Activated B cell treated with CpG ODN at 0.5 μM for 24 hours (primary cell): ENCODE measurements at regions of chr2 and their contacts with region 1.

Region 1: DNA sequence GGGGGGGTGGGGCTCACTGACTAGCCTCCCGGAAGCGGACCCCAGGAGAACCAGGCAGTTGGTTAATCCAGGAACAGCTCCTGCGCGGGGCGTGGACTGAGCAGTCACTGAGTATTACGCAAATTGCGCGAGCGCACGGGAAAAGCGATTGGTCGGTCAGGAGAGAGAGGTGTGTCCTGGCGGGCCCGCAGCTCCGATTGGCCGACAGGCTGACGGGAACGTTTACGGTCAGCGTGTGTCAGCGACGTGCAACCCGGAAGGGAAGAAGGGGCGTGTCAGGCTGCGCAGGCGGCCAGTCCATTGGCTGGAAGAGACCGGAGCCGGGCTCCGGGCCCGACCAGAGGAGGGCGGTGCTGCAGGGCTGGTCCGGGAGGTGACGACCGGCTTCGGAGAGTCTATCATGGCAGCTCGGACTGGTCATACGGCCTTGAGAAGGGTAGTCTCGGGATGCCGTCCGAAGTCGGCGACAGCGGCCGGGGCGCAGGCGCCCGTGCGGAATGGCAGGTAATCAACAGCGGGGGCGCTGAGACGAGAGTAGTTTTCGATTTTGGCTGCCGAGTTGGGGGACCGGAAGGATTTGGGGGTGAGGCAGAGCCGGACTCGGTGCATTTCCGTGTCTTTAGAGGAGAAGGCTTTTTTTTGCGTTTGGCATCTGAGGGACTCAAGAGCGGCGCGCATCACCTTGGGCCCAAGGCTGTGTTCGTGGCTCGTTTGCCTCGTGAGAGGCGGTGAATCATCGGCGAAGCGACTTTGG is at the start of gene COQ10B:
- DNase-seq: peak; percentile 91
- ATAC-seq: peak; percentile 88
- H3K4me3 Mint-ChIP-seq: peak within 1 kb of the TSS; percentile 91
- H3K27ac Mint-ChIP-seq: peak within 1 kb of the TSS; percentile 94
- H3K4me1 Mint-ChIP-seq: peaks cover 45% of the 10 kb centered on the region
- H3K27me3 Mint-ChIP-seq: no peaks in the 10 kb centered on the region
- CTCF ChIP-seq: no peak
- total RNA-seq, gene COQ10B: 25.1 and 27.5 TPM in 2 replicates

Region 2: GRCh38 chr2:196798980-196799379 is 654.4 kb before region 1 on chr2:
- CTCF ChIA-PET with region 1: no interaction called
- POLR2A ChIA-PET with region 1: interaction called, 4 read pairs
- intact Hi-C with region 1: loop called (anchors 1 kb)
- DNase-seq: no peak
- ATAC-seq: no peak
- H3K4me3 Mint-ChIP-seq: peak overlapping the region; percentile 97
- H3K27ac Mint-ChIP-seq: peak overlapping the region; percentile 92
- H3K4me1 Mint-ChIP-seq: peaks cover 18% of the 10 kb centered on the region
- H3K27me3 Mint-ChIP-seq: peaks cover 7% of the 10 kb centered on the region
- CTCF ChIP-seq: no peak

Region 3: DNA sequence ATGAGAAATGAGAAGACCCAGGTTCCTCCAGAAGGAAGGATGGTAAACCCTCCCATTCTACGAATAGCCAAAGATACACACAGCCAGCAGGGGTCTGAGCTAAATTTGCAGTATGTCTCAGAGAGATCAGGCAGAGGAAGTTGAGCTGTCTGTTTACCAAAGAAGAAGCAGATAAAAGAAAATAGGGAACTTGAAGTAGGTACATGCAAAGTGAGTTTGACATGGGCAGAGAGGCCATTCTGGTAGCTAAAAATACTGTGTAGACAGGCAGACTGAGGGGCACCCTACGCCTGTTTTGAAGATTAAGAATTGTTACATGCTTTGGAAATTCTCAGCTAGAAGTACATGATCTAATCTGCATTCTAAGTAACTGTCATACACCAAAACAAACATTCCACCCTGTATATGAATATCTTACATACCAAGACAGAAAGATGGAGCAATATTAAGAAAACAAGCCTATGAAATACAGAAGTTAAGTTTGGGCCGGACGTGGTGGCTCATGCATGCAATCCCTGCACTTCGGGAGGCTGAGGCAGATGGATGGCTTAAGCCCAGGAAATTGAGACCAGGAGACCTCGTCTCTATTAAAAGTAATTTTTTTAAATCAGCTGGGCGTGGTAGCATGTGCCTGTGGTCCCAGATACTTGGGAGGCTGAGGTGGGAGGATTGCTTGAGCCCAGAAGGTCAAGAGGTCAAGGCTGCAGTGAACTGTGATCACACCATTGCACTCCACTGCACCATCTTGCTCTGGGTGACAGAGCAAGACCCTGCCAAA is 300.7 kb before region 1 on chr2:
- CTCF ChIA-PET with region 1: no interaction called
- POLR2A ChIA-PET with region 1: no interaction called
- intact Hi-C with region 1: loop called (anchors 5 kb)
- DNase-seq: no peak
- ATAC-seq: peak; percentile 84
- H3K4me3 Mint-ChIP-seq: peak overlapping the region; percentile 79
- H3K27ac Mint-ChIP-seq: peak overlapping the region; percentile 97
- H3K4me1 Mint-ChIP-seq: peaks cover 97% of the 10 kb centered on the region
- H3K27me3 Mint-ChIP-seq: no peaks in the 10 kb centered on the region
- CTCF ChIP-seq: no peak

Region 4: DNA sequence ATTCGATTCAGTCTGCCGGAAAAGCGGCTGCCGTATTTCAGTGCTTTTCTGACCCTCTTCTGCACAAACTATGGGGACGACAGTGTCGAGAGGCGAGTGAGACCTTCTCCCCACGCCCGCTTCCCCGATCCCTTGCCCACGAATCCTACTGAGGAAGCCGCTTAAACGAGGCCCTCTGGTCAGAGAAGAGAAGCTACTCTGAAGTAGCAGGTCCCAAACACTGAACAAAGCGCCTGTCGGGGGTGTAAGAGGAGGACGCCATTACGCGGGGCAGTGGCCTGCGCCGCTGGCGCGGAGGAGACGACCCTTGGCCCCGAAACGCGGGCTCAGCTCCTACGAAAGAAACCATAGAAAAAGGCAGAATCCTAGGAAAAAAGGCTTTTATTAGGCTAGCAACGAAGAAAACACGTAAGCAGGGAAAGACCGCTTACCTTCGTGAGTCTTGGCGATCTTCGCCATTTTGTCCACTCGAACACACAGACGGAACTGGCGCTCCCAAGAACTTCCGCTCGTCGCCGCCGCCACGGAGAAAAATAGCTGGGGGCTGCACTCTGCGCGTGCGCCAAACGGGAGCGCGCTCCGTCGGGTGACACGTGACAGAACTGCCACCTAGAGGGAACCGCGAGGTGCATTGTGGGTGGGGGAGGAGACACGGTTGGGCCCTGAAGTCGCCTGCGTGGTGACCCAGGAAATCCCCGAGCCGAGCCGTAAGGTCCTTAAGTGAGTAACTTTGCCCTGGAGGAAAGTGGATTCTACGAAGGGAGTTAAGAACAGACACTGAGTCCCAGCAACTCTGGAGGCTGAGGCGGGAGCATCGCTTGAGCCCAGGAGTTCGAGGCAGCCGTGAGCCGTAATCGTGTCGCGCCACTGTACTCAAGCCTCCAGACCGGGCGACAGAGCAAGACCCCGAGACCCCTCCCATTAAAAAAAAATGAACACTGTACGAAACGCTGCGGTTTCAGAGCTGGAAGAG is 18.5 kb before region 1 on chr2 and contains the start of gene SF3B1:
- CTCF ChIA-PET with region 1: interaction called, 3 read pairs
- POLR2A ChIA-PET with region 1: interaction called, 146 read pairs
- intact Hi-C with region 1: loop called (anchors 1 kb)
- DNase-seq: peak; percentile 98
- ATAC-seq: peak; percentile 96
- H3K4me3 Mint-ChIP-seq: peak within 1 kb of the TSS; percentile 99
- H3K27ac Mint-ChIP-seq: peak within 1 kb of the TSS; percentile 100
- H3K4me1 Mint-ChIP-seq: peaks cover 62% of the 10 kb centered on the region
- H3K27me3 Mint-ChIP-seq: no peaks in the 10 kb centered on the region
- CTCF ChIP-seq: no peak
- total RNA-seq, gene SF3B1: 328 and 380 TPM in 2 replicates

Region 5: DNA sequence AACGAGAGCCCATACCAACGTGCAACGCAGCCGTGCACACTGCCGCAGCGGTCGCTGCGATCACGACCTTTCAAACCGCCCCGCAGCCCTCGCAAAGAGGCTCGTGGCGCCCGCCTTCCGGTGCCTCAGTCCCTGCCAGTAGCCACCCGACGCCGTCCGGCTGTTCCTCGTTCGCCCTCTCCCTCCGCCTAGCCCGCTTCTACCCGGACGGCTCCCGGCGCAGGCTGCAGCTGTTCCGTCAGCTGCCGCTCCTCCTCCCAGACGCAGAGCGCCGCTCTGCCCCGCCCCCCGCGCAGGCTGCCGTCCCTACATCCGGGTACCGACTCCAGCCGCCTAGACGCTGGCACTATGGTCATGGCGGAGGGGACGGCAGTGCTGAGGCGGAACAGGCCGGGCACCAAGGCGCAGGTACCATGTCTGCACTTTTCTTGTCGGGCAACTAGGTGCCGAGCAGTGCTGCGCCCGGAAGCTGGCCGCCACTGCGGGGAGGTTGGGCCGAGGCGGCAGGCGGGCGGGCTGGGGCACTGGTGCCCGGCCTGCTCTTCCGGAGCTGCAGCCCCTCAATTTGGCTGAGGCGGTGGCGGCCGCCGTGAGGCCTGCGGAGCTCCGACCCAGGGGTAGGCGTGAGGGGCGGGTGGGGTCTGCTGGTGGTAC is 62.5 kb after region 1 on chr2 and contains the start of gene MOB4:
- CTCF ChIA-PET with region 1: no interaction called
- POLR2A ChIA-PET with region 1: interaction called, 32 read pairs
- intact Hi-C with region 1: loop called (anchors 1 kb)
- DNase-seq: peak; percentile 96
- ATAC-seq: peak; percentile 95
- H3K4me3 Mint-ChIP-seq: peak within 1 kb of the TSS; percentile 96
- H3K27ac Mint-ChIP-seq: peak within 1 kb of the TSS; percentile 95
- H3K4me1 Mint-ChIP-seq: peaks cover 33% of the 10 kb centered on the region
- H3K27me3 Mint-ChIP-seq: no peaks in the 10 kb centered on the region
- CTCF ChIP-seq: no peak
- total RNA-seq, gene MOB4: 21.7 and 22.1 TPM in 2 replicates